Left cardiac atrium (tissue), 4 donors: ENCODE measurements at regions of chrX and their contacts with region 1.

Region 1: GRCh38 chrX:53433651-53434639 is at the start of gene HSD17B10:
- DNase-seq: peak; percentile 93
- ATAC-seq: peak; percentile 98 to 99
- total RNA-seq, gene HSD17B10: 98.9 to 106 TPM

Region 2: DNA sequence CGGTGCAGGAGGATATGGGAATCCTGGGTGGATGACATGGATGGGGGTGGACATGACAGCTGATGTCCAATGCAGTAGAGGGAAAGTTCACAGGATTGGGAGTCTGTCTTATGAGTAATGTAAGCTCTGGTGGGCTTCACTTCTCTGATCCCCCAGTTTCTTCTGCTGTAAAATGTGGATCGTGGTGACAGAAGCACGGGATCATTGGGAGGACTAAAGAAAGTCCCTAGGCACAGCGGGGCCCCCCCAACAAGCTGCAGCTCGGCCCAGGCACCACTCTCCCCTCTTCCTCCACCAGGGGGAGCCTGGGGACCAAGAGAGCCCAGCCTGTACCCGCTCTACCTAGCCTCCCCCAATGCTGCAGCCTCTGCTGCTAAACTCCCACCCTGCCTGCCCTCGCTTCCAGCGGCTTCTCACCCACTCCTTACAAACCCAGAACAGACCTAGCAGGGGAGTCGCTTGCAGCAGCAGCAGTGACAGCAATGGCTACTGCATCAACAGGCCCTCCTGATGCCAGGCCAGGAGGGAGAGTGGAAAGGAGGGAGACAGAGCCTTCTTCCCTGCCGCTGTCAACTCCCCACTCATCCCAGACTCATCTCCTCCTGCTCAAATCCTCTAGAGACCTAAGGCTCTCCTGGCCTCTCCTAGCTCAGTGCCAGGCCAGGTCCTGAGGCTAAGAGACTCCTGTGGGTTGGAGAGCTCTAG is 116.4 kb before region 1 on chrX:
- intact Hi-C with region 1: loop called (anchors 2 to 10 kb)
- DNase-seq: peak; percentile 73
- ATAC-seq: peak; percentile 72 to 76